Testis (tissue), 5 donors: ENCODE measurements at regions of chr12 and their contacts with region 1.

Region 1: GRCh38 chr12:118189741-118190191 is 53.8 kb downstream of the PEBP1 start:
- DNase-seq: peak; percentile 54
- H3K4me3 ChIP-seq: peak overlapping the region; percentile 29 to 48
- H3K27ac ChIP-seq: peak overlapping the region; percentile 87 to 89
- H3K4me1 ChIP-seq: peaks cover 3% of the 10 kb centered on the region
- H3K27me3 ChIP-seq: no peaks in the 10 kb centered on the region
- CTCF ChIP-seq: no peak
- POLR2A ChIP-seq: no peak

Region 2: GRCh38 chr12:117907212-117907611 is 282.6 kb before region 1 on chr12:
- intact Hi-C with region 1: no loop called
- DNase-seq: no peak
- H3K4me3 ChIP-seq: no peak overlapping the region
- H3K27ac ChIP-seq: no peak overlapping the region
- H3K4me1 ChIP-seq: peaks cover 3% of the 10 kb centered on the region
- H3K27me3 ChIP-seq: no peaks in the 10 kb centered on the region
- CTCF ChIP-seq: no peak
- POLR2A ChIP-seq: no peak

Region 3: GRCh38 chr12:118372541-118373495 is 183.1 kb after region 1 on chr12 and contains the start of gene TAOK3:
- intact Hi-C with region 1: loop called (anchors 10 kb)
- DNase-seq: peak; percentile 99
- H3K4me3 ChIP-seq: peak within 1 kb of the TSS; percentile 86 to 94
- H3K27ac ChIP-seq: peak within 1 kb of the TSS; percentile 68 to 75
- H3K4me1 ChIP-seq: peaks cover 19% of the 10 kb centered on the region
- H3K27me3 ChIP-seq: no peaks in the 10 kb centered on the region
- CTCF ChIP-seq: no peak
- POLR2A ChIP-seq: no peak
- total RNA-seq, gene TAOK3: 51.9 to 64.8 TPM